Activated CD4-positive, alpha-beta T cell treated with anti-CD3 and anti-CD28 coated beads, Interleukin-2, amount 10 ng/mL, durations not matched to agents 24 days and 14 days (primary cell): ENCODE measurements at regions of chr1 and their contacts with region 1.

Region 1: DNA sequence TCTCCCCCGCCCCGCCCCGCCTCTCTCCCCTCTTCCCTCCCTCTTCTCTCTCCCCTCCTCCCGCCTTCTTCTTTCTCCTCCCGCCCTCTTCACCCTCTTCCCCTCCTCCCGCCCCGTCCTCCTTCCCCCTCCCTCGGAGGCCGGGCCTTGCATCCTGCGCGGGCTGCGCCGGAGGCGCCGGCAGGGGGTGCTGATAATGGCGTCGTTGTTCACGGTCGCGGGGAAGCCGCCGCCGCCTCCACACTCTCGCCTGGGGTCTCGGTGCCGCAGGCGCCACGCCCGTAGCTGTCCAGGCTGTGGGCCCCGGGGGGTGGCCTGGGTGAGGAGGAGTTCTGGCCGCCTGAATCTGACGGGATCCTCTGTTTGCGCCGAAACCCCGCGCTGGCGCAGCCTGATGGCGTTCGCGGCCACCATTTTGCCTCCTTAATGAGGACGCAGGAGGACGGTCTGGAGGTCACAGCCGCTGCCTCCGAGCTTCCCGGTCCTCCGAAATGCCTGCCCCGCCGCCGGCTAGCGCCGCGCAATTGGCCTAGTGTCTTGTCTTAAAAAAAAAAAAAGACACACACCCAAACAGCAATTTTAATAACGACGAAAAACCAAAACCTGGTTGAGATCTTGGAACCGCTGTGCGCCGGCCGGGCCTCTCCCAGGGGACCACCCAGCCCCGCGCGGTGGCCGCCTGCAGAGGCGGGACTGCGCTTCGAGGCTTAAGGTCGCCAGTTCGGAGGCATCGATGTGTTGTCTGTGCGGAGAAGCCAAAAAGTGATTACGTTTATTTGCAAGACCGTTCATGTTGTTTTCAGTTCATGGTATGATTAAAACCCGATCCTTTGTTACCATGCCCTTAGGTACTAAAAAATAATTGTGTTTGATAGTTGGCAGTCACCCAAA is 106.6 kb upstream of the HNRNPU start:
- DNase-seq: peak; percentile 97
- H3K4me3 Mint-ChIP-seq: peak overlapping the region; percentile 94
- H3K27ac Mint-ChIP-seq: peak overlapping the region; percentile 99
- H3K4me1 Mint-ChIP-seq: peaks cover 17% of the 10 kb centered on the region
- H3K27me3 Mint-ChIP-seq: peaks cover 3% of the 10 kb centered on the region

Region 2: GRCh38 chr1:244652699-244653466 is 318.0 kb before region 1 on chr1 and contains the start of gene DESI2:
- intact Hi-C with region 1: loop called (anchors 1 kb)
- DNase-seq: peak; percentile 99
- H3K4me3 Mint-ChIP-seq: peak within 1 kb of the TSS; percentile 82
- H3K27ac Mint-ChIP-seq: peak within 1 kb of the TSS; percentile 84
- H3K4me1 Mint-ChIP-seq: peaks cover 23% of the 10 kb centered on the region
- H3K27me3 Mint-ChIP-seq: no peaks in the 10 kb centered on the region
- total RNA-seq, gene DESI2: 32.3 and 33.1 TPM in 2 replicates

Region 3: DNA sequence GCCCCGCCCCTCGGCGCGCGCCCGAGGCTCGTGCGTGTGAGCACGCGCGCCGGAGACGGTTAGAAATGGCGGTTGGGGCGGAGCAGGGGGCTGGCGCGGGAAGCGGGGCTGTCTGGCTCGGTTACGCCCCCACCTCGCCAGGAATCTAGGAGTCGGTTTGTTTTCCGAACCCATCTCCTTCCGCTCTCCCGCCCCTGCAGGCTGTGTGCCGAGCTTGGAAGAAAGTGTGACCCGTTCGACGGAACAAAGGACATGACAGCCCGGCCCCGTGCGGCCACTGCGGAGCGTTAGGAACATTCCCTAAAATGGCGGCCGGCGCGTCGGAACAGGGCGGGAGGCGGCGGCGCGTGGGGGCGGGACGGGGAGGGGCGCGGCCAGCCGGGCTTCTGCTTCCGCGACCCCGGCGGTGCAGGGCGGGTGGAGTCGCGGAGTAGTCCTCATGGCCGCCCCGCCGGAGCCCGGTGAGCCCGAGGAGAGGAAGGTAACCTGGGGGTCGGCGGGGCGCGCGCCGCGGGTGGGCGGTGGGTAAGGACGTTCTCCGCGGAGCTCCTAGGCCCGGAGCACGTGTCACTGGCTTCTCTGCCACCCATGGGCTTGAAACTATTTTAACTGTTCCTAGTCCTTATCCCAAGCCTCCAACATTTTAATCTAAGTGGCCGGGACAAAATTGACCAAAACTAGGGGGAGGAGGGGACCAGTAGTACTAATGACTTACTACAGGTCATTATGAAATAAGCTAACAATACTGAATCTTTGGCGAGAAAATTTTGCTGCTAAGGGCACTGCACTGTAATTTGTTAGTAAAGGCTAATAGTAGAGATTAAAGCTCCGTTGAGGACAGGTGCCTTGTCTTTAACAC is 135.4 kb before region 1 on chr1 and contains the start of gene COX20:
- intact Hi-C with region 1: loop called (anchors 1 kb)
- DNase-seq: peak; percentile 97
- H3K4me3 Mint-ChIP-seq: peak within 1 kb of the TSS; percentile 91
- H3K27ac Mint-ChIP-seq: peak within 1 kb of the TSS; percentile 99
- H3K4me1 Mint-ChIP-seq: peaks cover 43% of the 10 kb centered on the region
- H3K27me3 Mint-ChIP-seq: no peaks in the 10 kb centered on the region
- total RNA-seq, gene COX20: 28.6 and 30.0 TPM in 2 replicates

Region 4: GRCh38 chr1:244918421-244919319 is 52.2 kb before region 1 on chr1:
- intact Hi-C with region 1: loop called (anchors 2 kb)
- DNase-seq: peak; percentile 85
- H3K4me3 Mint-ChIP-seq: peak overlapping the region; percentile 88
- H3K27ac Mint-ChIP-seq: peak overlapping the region; percentile 81
- H3K4me1 Mint-ChIP-seq: peaks cover 5% of the 10 kb centered on the region
- H3K27me3 Mint-ChIP-seq: peaks cover 28% of the 10 kb centered on the region

Region 5: GRCh38 chr1:245045087-245045881 is 74.4 kb after region 1 on chr1:
- intact Hi-C with region 1: loop called (anchors 5 kb)
- DNase-seq: no peak
- H3K4me3 Mint-ChIP-seq: no peak overlapping the region
- H3K27ac Mint-ChIP-seq: no peak overlapping the region
- H3K4me1 Mint-ChIP-seq: no peaks in the 10 kb centered on the region
- H3K27me3 Mint-ChIP-seq: peaks cover 2% of the 10 kb centered on the region

Region 6: GRCh38 chr1:246506674-246507481 is 1536.0 kb after region 1 on chr1 and contains the start of gene SMYD3:
- intact Hi-C with region 1: loop called (anchors 10 kb)
- DNase-seq: peak; percentile 93
- H3K4me3 Mint-ChIP-seq: peak within 1 kb of the TSS; percentile 93
- H3K27ac Mint-ChIP-seq: peak within 1 kb of the TSS; percentile 88
- H3K4me1 Mint-ChIP-seq: peaks cover 23% of the 10 kb centered on the region
- H3K27me3 Mint-ChIP-seq: no peaks in the 10 kb centered on the region
- total RNA-seq, gene SMYD3: 23.9 and 24.4 TPM in 2 replicates